T-cell (primary cell): ENCODE measurements at regions of chr1 and their contacts with region 1.

Region 1: DNA sequence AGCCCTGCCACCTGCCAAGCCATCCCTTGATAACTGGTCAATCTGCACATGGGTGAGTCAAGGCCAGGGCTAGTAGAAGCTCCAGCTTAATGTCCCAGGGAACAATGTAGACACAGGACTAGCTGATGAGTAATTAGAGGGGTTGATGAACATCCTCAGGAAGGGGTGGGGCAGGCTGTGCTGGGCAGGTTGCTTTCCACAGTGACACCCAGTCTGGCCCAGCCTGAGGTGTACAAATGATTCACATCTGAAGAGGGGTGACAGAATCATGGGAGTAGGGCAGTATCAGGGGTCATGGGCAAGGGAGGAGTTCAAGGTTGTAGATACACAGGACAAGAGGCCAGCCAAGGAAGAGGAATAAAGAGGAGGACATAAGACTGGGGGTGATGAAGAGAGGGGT is 4.3 kb downstream of the LPAR3 start:
- DNase-seq: peak in 3 of 35 experiments; percentile 22 to 32 (median 24)
- ATAC-seq: peak in 3 of 4 experiments; percentile 68 to 78 (median 75)
- H3K4me3 ChIP-seq: no peak overlapping the region
- H3K4me3 Mint-ChIP-seq: peak overlapping the region in 1 of 3 donors; percentile 3
- H3K27ac ChIP-seq: no peak overlapping the region
- H3K27ac Mint-ChIP-seq: peak overlapping the region in 1 of 2 donors; percentile 50
- H3K4me1 ChIP-seq: peaks cover 4 to 22% of the 10 kb centered on the region in 2 experiments
- H3K4me1 Mint-ChIP-seq: peaks cover 31 to 44% (median 36%) of the 10 kb centered on the region in 3 donors
- H3K27me3 ChIP-seq: peaks cover 2 to 15% of the 10 kb centered on the region in 2 experiments
- H3K27me3 Mint-ChIP-seq: peaks cover 10 to 14% of the 10 kb centered on the region in 2 donors

Region 2: GRCh38 chr1:84907095-84907827 is 18.5 kb after region 1 on chr1:
- CTCF ChIA-PET with region 1: no interaction called
- POLR2A ChIA-PET with region 1: interaction called in 1 of 2 experiments, 12 read pairs
- DNase-seq: no peak
- ATAC-seq: no peak
- H3K4me3 ChIP-seq: no peak overlapping the region
- H3K4me3 Mint-ChIP-seq: no peak overlapping the region
- H3K27ac ChIP-seq: no peak overlapping the region
- H3K27ac Mint-ChIP-seq: no peak overlapping the region
- H3K4me1 ChIP-seq: no peaks in the 10 kb centered on the region
- H3K4me1 Mint-ChIP-seq: no peaks in the 10 kb centered on the region
- H3K27me3 ChIP-seq: no peaks in the 10 kb centered on the region
- H3K27me3 Mint-ChIP-seq: no peaks in the 10 kb centered on the region

Region 3: DNA sequence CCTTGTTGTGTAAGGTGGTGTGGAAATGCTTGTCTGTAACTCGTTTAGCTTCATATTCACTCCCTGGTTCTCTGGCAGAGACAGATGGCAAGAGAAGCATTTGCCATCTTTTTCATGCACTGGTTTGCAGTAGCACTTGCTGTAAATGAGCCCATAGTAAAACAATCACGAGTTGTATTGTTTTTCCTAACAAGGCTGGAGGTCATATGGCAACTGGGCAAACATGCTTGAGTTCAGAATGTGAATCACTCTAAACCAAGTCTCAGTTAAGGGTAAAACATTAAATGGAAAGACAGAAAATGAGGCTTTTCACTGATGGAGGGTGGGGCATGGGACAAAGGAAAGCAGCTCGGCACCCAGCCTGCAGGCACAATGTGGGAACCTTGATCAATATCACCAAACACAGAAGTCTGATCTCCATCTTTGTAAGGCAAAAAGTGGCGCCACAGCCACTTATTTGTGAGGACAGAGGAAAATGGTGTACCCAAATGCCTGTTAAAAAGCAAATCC is 30.8 kb after region 1 on chr1:
- CTCF ChIA-PET with region 1: no interaction called
- POLR2A ChIA-PET with region 1: no interaction called
- DNase-seq: no peak
- ATAC-seq: no peak
- H3K4me3 ChIP-seq: no peak overlapping the region
- H3K4me3 Mint-ChIP-seq: no peak overlapping the region
- H3K27ac ChIP-seq: no peak overlapping the region
- H3K27ac Mint-ChIP-seq: no peak overlapping the region
- H3K4me1 ChIP-seq: no peaks in the 10 kb centered on the region
- H3K4me1 Mint-ChIP-seq: no peaks in the 10 kb centered on the region
- H3K27me3 ChIP-seq: no peaks in the 10 kb centered on the region
- H3K27me3 Mint-ChIP-seq: peaks cover 0 to 3% of the 10 kb centered on the region in 2 donors